Naive thymus-derived CD4-positive, alpha-beta T cell (primary cell): ENCODE measurements at regions of chr3 and their contacts with region 1.

Region 1: DNA sequence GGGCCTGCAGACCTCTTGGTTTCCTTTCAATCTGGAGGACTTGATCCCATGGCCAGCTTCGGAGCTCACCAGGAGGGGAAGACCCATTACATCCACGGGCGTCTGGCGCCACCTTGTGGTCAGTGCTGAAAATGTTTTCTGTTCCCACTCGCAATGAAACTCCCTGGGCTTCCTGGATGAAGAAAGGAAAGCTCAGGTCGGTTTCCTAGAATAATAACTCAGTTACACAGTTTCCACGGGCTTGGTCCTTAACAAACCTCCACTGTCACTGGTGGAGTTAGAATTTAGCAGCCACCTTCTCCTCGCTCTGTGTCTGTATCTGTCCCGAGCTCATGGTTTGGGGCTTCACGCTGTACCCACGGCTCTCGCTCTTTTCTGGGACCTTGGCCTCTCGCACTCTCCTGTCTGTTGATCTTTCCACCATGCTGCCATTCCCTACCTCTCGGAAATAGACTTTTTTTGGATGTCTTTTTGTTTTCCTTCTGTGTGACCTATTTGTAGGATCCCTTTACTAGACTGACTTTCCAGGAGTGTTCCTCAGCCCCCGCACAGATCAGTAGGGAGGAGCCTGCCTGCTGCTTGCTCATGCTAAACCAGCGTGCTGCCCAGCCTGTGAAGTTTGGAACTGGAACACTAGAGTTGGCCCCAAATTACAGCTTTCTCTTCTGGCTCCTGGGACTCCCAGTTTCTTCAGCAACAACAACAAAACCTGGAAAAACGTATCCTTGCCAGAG is 56.3 kb downstream of the IL20RB start:
- DNase-seq: peak; percentile 59 to 87 (median 78)
- ATAC-seq: peak; percentile 93
- H3K4me3 ChIP-seq: peak overlapping the region; percentile 43
- H3K4me3 Mint-ChIP-seq: peak overlapping the region; percentile 65 to 87 (median 80)
- H3K27ac ChIP-seq: no peak overlapping the region
- H3K27ac Mint-ChIP-seq: peak overlapping the region in 4 of 9 donors; percentile 24 to 64 (median 57)
- H3K4me1 ChIP-seq: no peaks in the 10 kb centered on the region
- H3K4me1 Mint-ChIP-seq: peaks cover 5 to 10% (median 9%) of the 10 kb centered on the region in 7 donors
- H3K27me3 ChIP-seq: no peaks in the 10 kb centered on the region
- H3K27me3 Mint-ChIP-seq: peaks cover 0 to 4% (median 0%) of the 10 kb centered on the region in 5 donors

Region 2: DNA sequence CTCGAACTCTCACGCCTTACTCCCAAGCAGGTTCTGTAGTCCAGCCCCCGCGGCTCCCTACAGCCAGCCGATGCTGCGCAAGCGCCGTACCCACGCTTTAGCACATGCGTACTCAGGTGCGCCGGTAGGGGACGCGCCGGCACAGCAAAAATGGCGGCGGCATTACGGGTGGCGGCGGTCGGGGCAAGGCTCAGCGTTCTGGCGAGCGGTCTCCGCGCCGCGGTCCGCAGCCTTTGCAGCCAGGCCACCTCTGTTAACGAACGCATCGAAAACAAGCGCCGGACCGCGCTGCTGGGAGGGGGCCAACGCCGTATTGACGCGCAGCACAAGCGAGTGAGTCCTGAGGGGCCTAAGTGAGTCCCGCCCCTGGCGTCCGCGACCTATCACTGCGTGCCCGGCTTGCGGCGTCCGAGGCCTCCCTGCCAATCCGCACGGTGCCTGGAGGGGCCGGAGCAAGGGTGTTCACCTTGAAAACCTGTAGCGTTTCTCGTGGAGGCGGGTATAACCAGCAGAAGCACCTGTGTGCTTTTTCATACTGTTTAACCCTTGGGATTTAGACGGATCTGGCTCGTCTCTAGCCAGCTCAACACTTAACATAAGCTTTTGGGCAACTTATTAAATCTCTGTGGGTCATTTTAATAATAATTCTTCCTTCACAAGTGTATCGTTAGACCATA is 763.8 kb before region 1 on chr3 and contains the start of gene PCCB:
- CTCF ChIA-PET with region 1: interaction called, 5 read pairs
- POLR2A ChIA-PET with region 1: no interaction called
- intact Hi-C with region 1: loop called (anchors 1 to 5 kb)
- DNase-seq: peak; percentile 86 to 95 (median 93)
- ATAC-seq: peak; percentile 99
- H3K4me3 ChIP-seq: peak within 1 kb of the TSS; percentile 80
- H3K4me3 Mint-ChIP-seq: peak within 1 kb of the TSS; percentile 79 to 94 (median 90)
- H3K27ac ChIP-seq: peak within 1 kb of the TSS; percentile 80
- H3K27ac Mint-ChIP-seq: peak within 1 kb of the TSS; percentile 91 to 96 (median 93)
- H3K4me1 ChIP-seq: peaks cover 9% of the 10 kb centered on the region in 2 donors
- H3K4me1 Mint-ChIP-seq: peaks cover 12 to 30% (median 21%) of the 10 kb centered on the region in 7 donors
- H3K27me3 ChIP-seq: no peaks in the 10 kb centered on the region
- H3K27me3 Mint-ChIP-seq: no peaks in the 10 kb centered on the region
- total RNA-seq, gene PCCB: 13.6 to 22.6 (median 16.6) TPM

Region 3: GRCh38 chr3:136305878-136306277 is 708.2 kb before region 1 on chr3:
- CTCF ChIA-PET with region 1: no interaction called
- POLR2A ChIA-PET with region 1: no interaction called
- intact Hi-C with region 1: loop called in 1 of 2 experiments (anchors 2 kb)
- DNase-seq: peak in 1 of 9 donors; percentile 6
- ATAC-seq: no peak
- H3K4me3 ChIP-seq: no peak overlapping the region
- H3K4me3 Mint-ChIP-seq: no peak overlapping the region
- H3K27ac ChIP-seq: no peak overlapping the region
- H3K27ac Mint-ChIP-seq: no peak overlapping the region
- H3K4me1 ChIP-seq: no peaks in the 10 kb centered on the region
- H3K4me1 Mint-ChIP-seq: peaks cover 0 to 4% (median 0%) of the 10 kb centered on the region in 7 donors
- H3K27me3 ChIP-seq: no peaks in the 10 kb centered on the region
- H3K27me3 Mint-ChIP-seq: no peaks in the 10 kb centered on the region

Region 4: GRCh38 chr3:136390574-136390973 is 623.5 kb before region 1 on chr3:
- CTCF ChIA-PET with region 1: interaction called, 36 read pairs
- POLR2A ChIA-PET with region 1: no interaction called
- intact Hi-C with region 1: loop called (anchors 1 kb)
- DNase-seq: no peak
- ATAC-seq: no peak
- H3K4me3 ChIP-seq: no peak overlapping the region
- H3K4me3 Mint-ChIP-seq: no peak overlapping the region
- H3K27ac ChIP-seq: no peak overlapping the region
- H3K27ac Mint-ChIP-seq: no peak overlapping the region
- H3K4me1 ChIP-seq: no peaks in the 10 kb centered on the region
- H3K4me1 Mint-ChIP-seq: peaks cover 0 to 3% (median 0%) of the 10 kb centered on the region in 7 donors
- H3K27me3 ChIP-seq: no peaks in the 10 kb centered on the region
- H3K27me3 Mint-ChIP-seq: no peaks in the 10 kb centered on the region

Region 5: GRCh38 chr3:136545664-136546268 is 468.4 kb before region 1 on chr3:
- CTCF ChIA-PET with region 1: interaction called, 3 read pairs
- POLR2A ChIA-PET with region 1: no interaction called
- intact Hi-C with region 1: loop called (anchors 2 to 10 kb)
- DNase-seq: no peak
- ATAC-seq: no peak
- H3K4me3 ChIP-seq: no peak overlapping the region
- H3K4me3 Mint-ChIP-seq: no peak overlapping the region
- H3K27ac ChIP-seq: no peak overlapping the region
- H3K27ac Mint-ChIP-seq: peak overlapping the region in 2 of 9 donors; percentile 28 to 90
- H3K4me1 ChIP-seq: no peaks in the 10 kb centered on the region
- H3K4me1 Mint-ChIP-seq: peaks cover 4 to 30% (median 23%) of the 10 kb centered on the region in 7 donors
- H3K27me3 ChIP-seq: no peaks in the 10 kb centered on the region
- H3K27me3 Mint-ChIP-seq: no peaks in the 10 kb centered on the region

Region 6: GRCh38 chr3:136604961-136605360 is 409.2 kb before region 1 on chr3:
- CTCF ChIA-PET with region 1: no interaction called
- POLR2A ChIA-PET with region 1: no interaction called
- intact Hi-C with region 1: loop called in 1 of 2 experiments (anchors 10 kb)
- DNase-seq: no peak
- ATAC-seq: no peak
- H3K4me3 ChIP-seq: no peak overlapping the region
- H3K4me3 Mint-ChIP-seq: no peak overlapping the region
- H3K27ac ChIP-seq: no peak overlapping the region
- H3K27ac Mint-ChIP-seq: peak overlapping the region in 3 of 9 donors; percentile 3 to 8 (median 8)
- H3K4me1 ChIP-seq: no peaks in the 10 kb centered on the region
- H3K4me1 Mint-ChIP-seq: peaks cover under 1 to 17% (median 11%) of the 10 kb centered on the region in 7 donors
- H3K27me3 ChIP-seq: no peaks in the 10 kb centered on the region
- H3K27me3 Mint-ChIP-seq: no peaks in the 10 kb centered on the region